Activated B cell treated with CpG ODN at 0.5 μM for 24 hours (primary cell): ENCODE measurements at regions of chr9 and their contacts with region 1.

Region 1: GRCh38 chr9:134243778-134244467 is 79.6 kb upstream of the RNU6ATAC start:
- DNase-seq: peak; percentile 42
- ATAC-seq: peak; percentile 97
- H3K4me3 Mint-ChIP-seq: peak overlapping the region; percentile 70
- H3K27ac Mint-ChIP-seq: peak overlapping the region; percentile 84
- H3K4me1 Mint-ChIP-seq: peaks cover 47% of the 10 kb centered on the region
- H3K27me3 Mint-ChIP-seq: no peaks in the 10 kb centered on the region
- CTCF ChIP-seq: no peak

Region 2: DNA sequence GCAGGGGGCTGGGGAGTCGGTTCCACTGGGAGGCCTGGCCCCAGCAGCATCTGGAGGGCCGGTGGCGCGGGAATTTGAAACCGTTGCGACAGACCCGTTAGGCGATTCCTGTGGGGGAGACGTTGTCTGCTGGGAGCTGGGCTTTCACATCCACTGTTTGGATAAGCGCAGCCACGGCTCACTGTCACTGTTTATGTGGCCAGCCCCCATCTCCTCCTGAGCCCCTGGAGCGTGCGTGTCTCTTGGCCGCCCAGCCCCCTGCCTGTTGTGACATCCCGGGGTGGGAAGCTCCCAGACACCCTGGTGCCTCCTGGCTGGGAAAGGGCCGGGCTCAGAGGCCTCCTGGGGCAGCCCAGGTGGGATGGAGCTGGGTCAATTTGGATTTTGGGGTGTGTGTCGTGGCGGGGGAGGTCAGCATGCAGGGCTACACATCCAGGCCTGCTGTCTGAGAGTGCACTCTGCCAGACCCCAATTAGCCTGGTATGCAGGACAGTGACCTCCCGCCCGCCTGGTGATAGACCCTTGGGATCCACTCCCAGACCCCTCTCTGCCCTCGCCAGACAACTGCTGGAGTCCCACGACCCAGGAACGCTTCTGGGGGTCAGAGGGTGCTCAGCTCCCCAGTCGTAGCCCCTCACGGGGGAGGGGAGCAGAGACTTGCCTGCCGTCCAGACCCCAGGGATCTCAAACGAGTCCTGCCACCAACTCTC is 17.5 kb before region 1 on chr9:
- CTCF ChIA-PET with region 1: no interaction called
- POLR2A ChIA-PET with region 1: no interaction called
- intact Hi-C with region 1: no loop called
- DNase-seq: no peak
- ATAC-seq: no peak
- H3K4me3 Mint-ChIP-seq: no peak overlapping the region
- H3K27ac Mint-ChIP-seq: no peak overlapping the region
- H3K4me1 Mint-ChIP-seq: no peaks in the 10 kb centered on the region
- H3K27me3 Mint-ChIP-seq: peaks cover 11% of the 10 kb centered on the region
- CTCF ChIP-seq: no peak

Region 3: DNA sequence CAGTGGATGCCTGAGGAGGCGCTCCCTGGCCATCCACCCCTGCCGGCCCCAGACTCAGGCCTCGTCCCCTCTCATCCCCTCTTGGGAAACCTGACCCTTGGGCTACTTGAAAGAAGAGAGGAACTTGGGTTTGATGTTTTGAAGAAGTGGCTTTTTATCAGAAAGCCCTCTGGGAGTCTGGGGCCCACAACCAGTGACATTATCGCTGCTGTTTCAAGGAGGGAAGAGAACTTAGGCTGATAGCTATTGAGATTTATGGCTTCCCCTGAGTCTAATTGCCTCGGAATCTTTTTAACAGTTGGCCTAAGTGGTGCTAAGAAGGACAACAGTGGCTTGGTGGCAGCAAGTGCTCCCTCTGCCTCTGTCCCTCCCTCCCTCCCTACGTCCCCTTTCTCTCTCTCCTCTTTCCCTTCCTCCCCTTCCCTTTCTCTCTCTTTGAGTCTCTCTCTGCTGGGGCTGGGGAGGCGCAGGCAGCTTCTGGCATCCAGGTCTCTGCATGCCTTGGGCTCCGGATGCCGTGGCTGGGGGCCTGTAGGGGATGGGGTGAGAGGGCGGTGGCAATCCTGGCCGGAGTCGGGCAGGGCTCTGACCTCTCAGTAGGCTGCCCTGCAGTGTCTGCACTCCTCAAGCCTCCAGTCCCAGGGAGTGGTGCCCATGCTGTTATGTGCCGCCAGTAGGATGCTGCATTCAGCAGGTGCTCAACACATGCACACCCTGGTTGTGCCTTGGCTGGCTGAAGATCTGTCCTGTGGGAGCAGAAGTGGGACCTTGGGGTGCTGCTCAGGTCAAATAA is 32.7 kb after region 1 on chr9:
- CTCF ChIA-PET with region 1: no interaction called
- POLR2A ChIA-PET with region 1: no interaction called
- intact Hi-C with region 1: loop called (anchors 2 kb)
- DNase-seq: no peak
- ATAC-seq: no peak
- H3K4me3 Mint-ChIP-seq: no peak overlapping the region
- H3K27ac Mint-ChIP-seq: no peak overlapping the region
- H3K4me1 Mint-ChIP-seq: peaks cover 22% of the 10 kb centered on the region
- H3K27me3 Mint-ChIP-seq: peaks cover 7% of the 10 kb centered on the region
- CTCF ChIP-seq: no peak

Region 4: GRCh38 chr9:134293611-134294165 is 49.8 kb after region 1 on chr9:
- CTCF ChIA-PET with region 1: no interaction called
- POLR2A ChIA-PET with region 1: no interaction called
- intact Hi-C with region 1: loop called (anchors 2 kb)
- DNase-seq: no peak
- ATAC-seq: peak; percentile 57
- H3K4me3 Mint-ChIP-seq: peak overlapping the region; percentile 79
- H3K27ac Mint-ChIP-seq: no peak overlapping the region
- H3K4me1 Mint-ChIP-seq: peaks cover 14% of the 10 kb centered on the region
- H3K27me3 Mint-ChIP-seq: peaks cover 2% of the 10 kb centered on the region
- CTCF ChIP-seq: no peak

Region 5: GRCh38 chr9:134391314-134392231 is 147.7 kb after region 1 on chr9:
- CTCF ChIA-PET with region 1: no interaction called
- POLR2A ChIA-PET with region 1: interaction called, 3 read pairs
- intact Hi-C with region 1: loop called (anchors 2 kb)
- DNase-seq: peak; percentile 62
- ATAC-seq: peak; percentile 59
- H3K4me3 Mint-ChIP-seq: peak overlapping the region; percentile 81
- H3K27ac Mint-ChIP-seq: peak overlapping the region; percentile 98
- H3K4me1 Mint-ChIP-seq: peaks cover 66% of the 10 kb centered on the region
- H3K27me3 Mint-ChIP-seq: no peaks in the 10 kb centered on the region
- CTCF ChIP-seq: no peak